Aorta (tissue), 5 donors: ENCODE measurements at regions of chr6 and their contacts with region 1.

Region 1: GRCh38 chr6:148250975-148251685 is 91.5 kb upstream of the SASH1 start:
- DNase-seq: no peak
- ATAC-seq: peak; percentile 87
- H3K4me3 ChIP-seq: no peak overlapping the region
- H3K27ac ChIP-seq: no peak overlapping the region
- H3K4me1 ChIP-seq: peaks cover 0 to 4% of the 10 kb centered on the region in 2 donors
- H3K27me3 ChIP-seq: no peaks in the 10 kb centered on the region

Region 2: DNA sequence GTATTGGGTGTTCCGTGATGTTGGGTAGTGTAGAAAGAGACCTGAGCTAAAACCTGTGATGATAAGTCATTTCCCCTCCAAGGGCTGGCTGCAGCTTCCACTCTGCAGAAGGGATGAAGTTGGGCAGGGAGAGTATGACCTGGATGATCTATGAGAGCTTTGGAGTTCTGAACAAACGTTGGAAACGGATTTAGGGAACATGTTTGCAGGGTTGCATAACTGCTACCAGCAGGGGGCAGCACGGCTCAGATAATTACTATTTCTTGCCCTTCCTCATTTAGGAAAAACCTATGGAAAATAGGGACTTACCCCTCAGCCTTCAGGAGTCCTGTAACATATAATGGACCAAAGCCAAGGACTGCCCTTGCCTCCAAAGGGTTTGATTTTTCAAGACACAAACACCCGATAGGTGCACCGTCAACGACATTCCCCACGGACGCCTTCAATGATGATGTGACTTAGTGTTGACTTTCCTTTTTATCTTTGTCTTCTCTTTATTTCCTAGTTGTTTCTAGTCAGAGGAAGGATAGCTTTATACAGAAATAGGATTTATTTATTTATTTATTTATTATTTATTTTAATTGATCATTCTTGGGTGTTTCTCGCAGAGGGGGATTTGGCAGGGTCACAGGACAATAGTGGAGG is 73.4 kb before region 1 on chr6:
- intact Hi-C with region 1: loop called (anchors 1 to 2 kb)
- DNase-seq: peak; percentile 75 to 91
- ATAC-seq: peak; percentile 81
- H3K4me3 ChIP-seq: no peak overlapping the region
- H3K27ac ChIP-seq: no peak overlapping the region
- H3K4me1 ChIP-seq: no peaks in the 10 kb centered on the region
- H3K27me3 ChIP-seq: no peaks in the 10 kb centered on the region

Region 3: DNA sequence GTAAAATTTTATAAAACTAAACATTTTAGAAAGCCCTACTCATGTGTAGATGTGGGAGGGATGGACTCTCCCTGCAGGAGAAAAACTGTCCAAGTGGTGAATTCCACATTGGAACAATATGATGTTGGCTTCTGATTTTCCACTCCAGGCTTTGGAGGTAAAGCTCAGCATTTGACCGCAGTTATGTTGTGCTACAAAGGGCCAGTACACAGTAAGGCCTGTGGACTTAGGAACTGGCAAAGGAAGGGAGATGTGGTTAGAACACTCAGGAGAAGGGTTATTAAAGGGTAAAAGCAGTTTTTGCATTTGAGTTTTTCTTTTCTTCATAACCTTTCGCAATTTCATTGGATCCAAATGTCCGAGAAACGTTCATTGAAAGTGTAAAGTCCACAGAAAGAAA is 58.8 kb before region 1 on chr6:
- intact Hi-C with region 1: loop called in 1 of 2 experiments (anchors 5 kb)
- DNase-seq: no peak
- ATAC-seq: peak; percentile 67
- H3K4me3 ChIP-seq: no peak overlapping the region
- H3K27ac ChIP-seq: no peak overlapping the region
- H3K4me1 ChIP-seq: peaks cover 0 to 8% of the 10 kb centered on the region in 2 donors
- H3K27me3 ChIP-seq: no peaks in the 10 kb centered on the region